Breast epithelium (tissue), 4 donors: ENCODE measurements at regions of chr9 and their contacts with region 1.

Region 1: DNA sequence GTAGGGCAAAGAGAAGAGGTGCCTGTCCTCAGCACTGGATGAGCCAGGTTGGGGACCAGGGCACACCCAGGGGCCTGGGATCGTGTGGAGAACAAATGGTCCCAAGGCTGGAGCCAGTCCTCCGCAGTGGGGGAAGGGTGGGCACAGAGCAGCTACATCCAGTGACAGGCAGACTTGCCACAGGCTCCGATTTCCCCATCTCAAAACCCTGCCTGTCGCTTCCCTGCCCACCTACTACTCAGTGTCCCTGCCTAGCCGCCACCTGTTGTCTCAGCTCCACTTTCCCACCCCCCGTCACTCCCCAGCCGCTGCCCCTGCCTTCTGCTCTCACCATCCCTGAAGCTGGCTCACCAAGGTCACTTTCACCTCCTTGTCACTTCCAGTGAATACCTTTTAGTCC is 13.9 kb upstream of the ENHO start:
- DNase-seq: no peak
- H3K4me3 ChIP-seq: no peak overlapping the region
- H3K27ac ChIP-seq: no peak overlapping the region
- H3K4me1 ChIP-seq: no peaks in the 10 kb centered on the region
- H3K27me3 ChIP-seq: no peaks in the 10 kb centered on the region
- CTCF ChIP-seq: no peak
- POLR2A ChIP-seq: no peak

Region 2: GRCh38 chr9:34479431-34479866 is 57.2 kb before region 1 on chr9:
- intact Hi-C with region 1: loop called (anchors 5 kb)
- DNase-seq: no peak
- H3K4me3 ChIP-seq: no peak overlapping the region
- H3K27ac ChIP-seq: no peak overlapping the region
- H3K4me1 ChIP-seq: no peaks in the 10 kb centered on the region
- H3K27me3 ChIP-seq: no peaks in the 10 kb centered on the region
- CTCF ChIP-seq: no peak
- POLR2A ChIP-seq: no peak

Region 3: DNA sequence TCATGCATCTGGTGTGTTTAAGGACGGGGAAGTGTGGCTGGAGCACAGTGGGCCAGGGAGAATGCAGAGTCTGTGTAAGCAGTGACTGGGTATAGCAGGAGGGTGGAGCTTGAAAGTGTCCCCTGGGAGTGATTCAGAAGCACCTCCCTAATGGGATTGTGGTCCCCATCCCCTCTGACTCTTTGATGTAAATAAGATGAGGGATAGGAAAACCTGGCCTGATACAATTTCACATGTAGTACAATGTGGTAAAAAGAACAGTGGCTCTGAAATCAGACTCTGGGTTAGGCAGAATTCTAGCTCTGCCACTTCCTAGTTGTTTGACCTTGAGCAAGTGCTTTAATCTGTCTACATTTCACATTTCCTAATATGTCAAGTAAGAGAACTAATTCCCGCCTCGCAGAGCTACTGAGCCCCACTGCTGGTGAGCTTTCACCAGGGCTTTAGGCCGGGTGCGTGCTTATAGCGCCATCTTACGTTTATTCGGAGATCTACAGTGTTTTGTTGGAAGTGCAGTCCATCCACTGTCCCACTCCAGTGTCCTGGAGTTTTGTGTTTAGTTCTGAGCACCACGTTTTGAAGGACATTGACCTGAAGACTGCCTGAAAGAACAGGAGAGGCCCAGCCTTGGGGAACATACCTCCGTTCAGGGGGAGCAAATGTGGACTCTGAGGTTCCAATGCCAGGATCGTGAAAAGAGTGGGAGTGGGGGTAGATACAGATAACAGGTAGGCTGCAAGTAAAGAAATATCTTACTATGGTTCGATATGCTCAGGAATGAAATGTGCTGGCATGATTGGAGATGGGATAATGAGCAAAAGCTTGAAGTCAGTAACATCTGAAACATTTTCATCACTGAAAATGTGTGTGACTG is 1017.2 kb after region 1 on chr9:
- intact Hi-C with region 1: no loop called
- DNase-seq: peak in 1 of 2 donors; percentile 53
- H3K4me3 ChIP-seq: no peak overlapping the region
- H3K27ac ChIP-seq: peak overlapping the region; percentile 31 to 60
- H3K4me1 ChIP-seq: no peaks in the 10 kb centered on the region
- H3K27me3 ChIP-seq: no peaks in the 10 kb centered on the region
- CTCF ChIP-seq: peak; percentile 75 to 87 (median 86)
- POLR2A ChIP-seq: no peak